ENCODE measurements at regions of chr10 and their contacts with region 1.

Region 1: DNA sequence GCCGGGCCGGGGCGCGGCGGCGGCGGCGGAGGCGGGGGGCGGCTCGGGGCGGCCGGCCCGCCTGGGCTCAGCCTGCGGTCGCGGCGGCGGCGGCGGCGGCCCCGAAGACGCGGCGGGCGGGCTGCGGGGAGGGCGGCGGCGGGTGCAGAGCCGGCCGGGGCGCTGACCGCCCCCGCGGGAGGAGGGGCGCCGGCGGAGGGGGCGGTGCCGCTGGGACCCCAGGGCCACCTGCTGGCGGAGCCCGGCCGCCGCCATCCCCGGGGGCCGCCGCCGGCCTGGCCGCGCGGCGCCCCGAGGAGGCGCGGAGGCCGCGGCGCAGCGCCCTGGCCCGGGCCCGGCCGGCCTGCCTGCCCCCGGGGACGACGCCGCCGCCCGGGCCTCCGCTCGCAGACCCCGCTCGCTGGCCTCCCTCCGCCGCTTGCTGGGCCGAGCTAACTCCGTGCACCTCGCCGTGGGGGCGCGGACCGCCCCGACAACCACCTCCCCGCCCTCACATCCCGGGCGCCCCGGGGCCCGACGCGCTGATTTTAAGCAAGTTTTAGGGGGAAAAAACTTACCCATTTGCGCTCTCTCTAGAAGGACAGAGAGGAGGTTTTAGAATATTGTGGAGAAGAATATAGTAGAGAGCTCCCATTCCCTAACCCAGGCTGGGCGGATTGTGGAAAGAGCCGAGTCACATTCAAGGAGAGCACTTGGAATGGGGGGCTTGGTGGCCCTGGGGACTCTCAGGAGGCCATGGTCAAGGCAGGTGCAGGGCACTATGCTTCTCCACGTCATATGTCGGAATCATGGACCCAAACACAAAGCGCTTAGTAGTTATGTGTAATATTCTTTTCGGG is at the start of gene BEND7:
- DNase-seq: peak; percentile 59 to 73
- ATAC-seq: peak; percentile 80 to 93 (median 92)
- H3K4me3 ChIP-seq: peak within 1 kb of the TSS; percentile 81
- H3K27ac ChIP-seq: peak within 1 kb of the TSS; percentile 73
- H3K4me1 ChIP-seq: peaks cover 15% of the 10 kb centered on the region
- H3K27me3 ChIP-seq: no peaks in the 10 kb centered on the region
- CTCF ChIP-seq: no peak
- total RNA-seq, gene BEND7: 16.3 to 27.6 (median 23.6) TPM

Region 2: DNA sequence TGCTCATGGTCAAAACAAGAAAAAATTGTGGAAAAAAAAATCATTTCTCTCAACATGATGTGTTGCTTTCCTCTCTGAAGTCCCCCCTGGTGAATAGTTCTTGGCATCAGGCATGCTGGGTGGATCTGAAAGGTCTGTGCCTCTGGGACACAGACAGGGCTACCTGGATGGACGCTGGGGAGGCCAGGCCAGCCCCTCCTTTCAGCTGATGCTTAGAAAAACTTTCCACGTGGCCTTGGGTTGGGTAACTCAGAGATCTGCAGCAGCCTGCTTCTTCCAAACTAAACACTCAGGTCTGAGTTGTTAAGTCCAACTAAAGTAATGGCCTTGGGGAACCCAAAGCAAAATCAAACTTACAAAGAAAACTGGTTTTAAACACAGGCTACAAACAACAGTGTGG is 640.6 kb before region 1 on chr10:
- intact Hi-C with region 1: no loop called
- DNase-seq: no peak
- ATAC-seq: no peak
- H3K4me3 ChIP-seq: no peak overlapping the region
- H3K27ac ChIP-seq: no peak overlapping the region
- H3K4me1 ChIP-seq: no peaks in the 10 kb centered on the region
- H3K27me3 ChIP-seq: no peaks in the 10 kb centered on the region
- CTCF ChIP-seq: no peak

Region 3: GRCh38 chr10:13371897-13372470 is 157.1 kb before region 1 on chr10:
- intact Hi-C with region 1: loop called in 1 of 2 experiments (anchors 5 kb)
- DNase-seq: peak; percentile 42 to 67
- ATAC-seq: peak; percentile 75 to 89 (median 84)
- H3K4me3 ChIP-seq: no peak overlapping the region
- H3K27ac ChIP-seq: no peak overlapping the region
- H3K4me1 ChIP-seq: no peaks in the 10 kb centered on the region
- H3K27me3 ChIP-seq: no peaks in the 10 kb centered on the region
- CTCF ChIP-seq: peak; percentile 85